PC-3 (cell line): ENCODE measurements at regions of chr18 and their contacts with region 1.

Region 1: GRCh38 chr18:25081001-25081400 is 271.0 kb downstream of the ZNF521 start:
- DNase-seq: no peak
- ATAC-seq: no peak
- H3K4me3 ChIP-seq: no peak overlapping the region
- H3K27ac ChIP-seq: no peak overlapping the region
- H3K4me1 ChIP-seq: no peaks in the 10 kb centered on the region
- H3K27me3 ChIP-seq: peaks cover 45% of the 10 kb centered on the region
- CTCF ChIP-seq: no peak

Region 2: DNA sequence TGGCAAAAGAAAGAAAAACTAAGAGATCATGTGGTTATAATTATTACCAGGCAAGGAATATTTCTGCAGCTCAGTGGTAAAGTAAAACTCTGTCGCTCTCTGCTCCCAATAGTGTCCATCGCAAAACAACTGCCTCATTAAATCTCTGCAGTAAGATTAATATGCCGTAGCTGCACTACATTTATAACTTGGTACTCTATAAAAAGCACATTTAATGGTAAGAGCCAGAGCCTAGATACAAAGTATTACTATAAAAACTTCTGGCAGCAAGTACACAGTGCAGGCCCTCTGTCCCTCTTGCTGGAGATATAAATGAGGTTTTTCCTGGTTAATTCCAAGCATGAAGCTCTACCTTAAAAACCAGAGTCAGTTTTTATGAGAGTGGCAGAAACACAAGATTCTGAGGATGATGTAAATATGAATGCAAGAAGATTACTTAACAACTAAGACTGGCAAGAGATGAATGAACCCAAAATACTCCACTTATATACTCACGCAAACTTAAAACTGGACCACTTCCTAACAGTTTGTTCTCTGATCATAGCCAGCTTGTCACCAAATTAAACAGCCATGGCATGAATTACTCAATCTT is 245.5 kb after region 1 on chr18:
- CTCF ChIA-PET with region 1: no interaction called
- POLR2A ChIA-PET with region 1: no interaction called
- intact Hi-C with region 1: loop called (anchors 10 kb)
- DNase-seq: no peak
- ATAC-seq: no peak
- H3K4me3 ChIP-seq: no peak overlapping the region
- H3K27ac ChIP-seq: no peak overlapping the region
- H3K4me1 ChIP-seq: no peaks in the 10 kb centered on the region
- H3K27me3 ChIP-seq: peaks cover 78% of the 10 kb centered on the region
- CTCF ChIP-seq: no peak

Region 3: DNA sequence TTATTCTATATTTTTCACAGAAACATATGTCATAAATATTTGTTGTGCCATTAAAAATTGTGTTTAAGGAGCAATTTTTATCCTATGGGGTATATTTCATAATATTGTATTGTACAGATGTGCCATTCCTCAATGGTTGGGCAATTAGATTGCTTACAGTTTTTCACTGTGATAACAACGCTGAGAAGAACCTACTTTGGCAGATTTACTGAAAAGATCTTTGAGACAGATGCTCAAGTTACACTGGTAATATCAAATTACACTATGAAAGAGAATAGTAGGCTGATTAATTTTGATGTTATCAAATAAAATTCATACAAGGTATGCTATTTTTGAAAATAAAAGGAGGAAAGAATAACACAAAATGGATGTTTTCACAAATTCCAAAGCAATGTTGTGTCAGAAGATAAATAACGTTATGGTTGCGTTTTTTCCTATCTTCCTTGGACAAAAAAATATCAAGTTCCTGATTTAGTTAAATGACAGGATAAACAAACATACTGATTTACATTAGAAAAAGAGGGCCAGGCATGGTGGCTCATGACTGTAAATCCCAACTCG is 606.0 kb after region 1 on chr18:
- CTCF ChIA-PET with region 1: no interaction called
- POLR2A ChIA-PET with region 1: no interaction called
- intact Hi-C with region 1: no loop called
- DNase-seq: no peak
- ATAC-seq: no peak
- H3K4me3 ChIP-seq: no peak overlapping the region
- H3K27ac ChIP-seq: no peak overlapping the region
- H3K4me1 ChIP-seq: no peaks in the 10 kb centered on the region
- H3K27me3 ChIP-seq: peaks cover 9% of the 10 kb centered on the region
- CTCF ChIP-seq: no peak

Region 4: GRCh38 chr18:25875551-25876240 is 794.7 kb after region 1 on chr18:
- CTCF ChIA-PET with region 1: no interaction called
- POLR2A ChIA-PET with region 1: no interaction called
- intact Hi-C with region 1: no loop called
- DNase-seq: no peak
- ATAC-seq: no peak
- H3K4me3 ChIP-seq: no peak overlapping the region
- H3K27ac ChIP-seq: no peak overlapping the region
- H3K4me1 ChIP-seq: no peaks in the 10 kb centered on the region
- H3K27me3 ChIP-seq: peaks cover 60% of the 10 kb centered on the region
- CTCF ChIP-seq: no peak